ENCODE measurements at regions of chr4 and their contacts with region 1.

Region 1: DNA sequence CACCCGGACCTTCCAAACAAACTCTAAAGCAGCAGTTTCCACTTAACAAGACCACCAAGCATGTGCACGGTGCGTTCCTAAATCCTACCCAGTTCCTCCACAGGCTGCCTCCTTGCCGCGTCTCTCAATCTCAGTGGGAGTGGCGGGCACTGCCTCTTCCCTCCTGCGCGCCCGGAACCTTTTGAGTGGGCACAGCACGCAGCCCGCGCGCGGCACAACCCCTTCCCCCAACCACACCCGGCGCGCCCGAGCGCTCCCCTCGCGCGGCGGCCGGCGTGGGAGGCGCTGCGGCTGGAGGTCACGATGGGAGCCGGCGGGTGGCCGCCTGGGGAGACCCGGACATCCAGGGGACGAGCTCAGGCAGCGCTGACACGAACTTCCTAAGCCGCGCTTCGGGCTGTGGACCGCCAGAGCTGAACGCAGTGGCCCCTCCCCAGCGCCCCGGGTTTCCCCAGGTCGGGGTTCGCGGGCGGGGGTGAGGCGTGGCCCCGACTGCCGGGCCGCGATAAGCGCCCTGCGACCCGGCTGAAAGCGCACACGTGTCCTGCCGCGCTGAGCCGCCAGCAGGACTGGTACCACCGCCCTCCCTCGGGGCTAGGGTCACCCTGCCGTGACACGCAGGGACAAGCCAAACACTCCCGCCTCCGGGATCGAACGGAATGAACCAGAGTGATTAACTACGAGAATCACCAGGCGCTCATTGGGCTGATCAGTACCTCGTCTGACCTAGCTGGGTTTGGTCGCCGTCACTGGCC is at the start of gene ABCG2:
- DNase-seq: peak; percentile 47
- H3K4me3 ChIP-seq: peak within 1 kb of the TSS; percentile 59 to 78 (median 72)
- H3K27ac ChIP-seq: no peak within 1 kb of the TSS
- H3K4me1 ChIP-seq: peaks cover 15% of the 10 kb centered on the region
- H3K27me3 ChIP-seq: no peaks in the 10 kb centered on the region
- CTCF ChIP-seq: no peak
- total RNA-seq, gene ABCG2: 2.5 to 5.4 TPM

Region 2: GRCh38 chr4:88054901-88055300 is 103.8 kb before region 1 on chr4:
- CTCF ChIA-PET with region 1: no interaction called
- dilution Hi-C with region 1: no loop called
- in situ Hi-C with region 1: no loop called
- intact Hi-C with region 1: loop called (anchors 10 kb)
- DNase-seq: peak; percentile 39
- H3K4me3 ChIP-seq: no peak overlapping the region
- H3K27ac ChIP-seq: no peak overlapping the region
- H3K4me1 ChIP-seq: no peaks in the 10 kb centered on the region
- H3K27me3 ChIP-seq: no peaks in the 10 kb centered on the region
- CTCF ChIP-seq: peak; percentile 40 to 63

Region 3: DNA sequence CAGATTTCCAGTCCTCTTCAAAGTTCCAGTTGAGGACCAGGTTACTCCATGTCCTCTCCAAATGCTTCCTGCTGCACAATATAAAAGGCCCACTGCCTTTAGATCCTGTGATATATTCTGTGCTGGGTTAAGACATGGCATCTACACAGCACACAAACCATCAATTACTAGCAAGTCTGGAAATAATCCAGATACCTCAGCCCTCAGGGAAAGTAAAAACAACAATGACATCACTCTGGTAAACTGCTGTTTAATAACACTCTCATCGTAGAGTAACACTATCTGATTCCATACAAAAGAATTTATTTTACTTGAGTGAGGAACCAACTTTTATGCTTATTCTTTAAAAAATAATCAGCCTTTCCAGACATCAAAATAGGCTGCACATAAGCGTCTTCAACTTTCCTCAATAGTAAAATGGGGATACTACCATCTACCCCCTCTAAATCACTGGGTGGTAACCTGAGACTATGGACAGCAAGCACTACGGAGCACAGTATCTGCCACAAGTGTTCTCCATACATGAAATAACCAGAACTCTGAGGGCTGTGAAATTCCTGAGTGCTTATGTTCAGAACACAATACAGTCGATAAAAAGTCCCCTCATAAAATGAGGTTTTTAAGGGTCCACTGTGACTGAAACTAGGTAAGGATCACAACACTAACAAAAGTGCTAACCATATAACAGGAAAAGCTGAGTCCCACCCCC is 53.6 kb before region 1 on chr4:
- CTCF ChIA-PET with region 1: no interaction called
- dilution Hi-C with region 1: no loop called
- in situ Hi-C with region 1: no loop called
- intact Hi-C with region 1: loop called (anchors 10 kb)
- DNase-seq: peak; percentile 87
- H3K4me3 ChIP-seq: no peak overlapping the region
- H3K27ac ChIP-seq: no peak overlapping the region
- H3K4me1 ChIP-seq: peaks cover 28% of the 10 kb centered on the region
- H3K27me3 ChIP-seq: no peaks in the 10 kb centered on the region
- CTCF ChIP-seq: no peak

Region 4: GRCh38 chr4:88792268-88792781 is 633.7 kb after region 1 on chr4:
- CTCF ChIA-PET with region 1: no interaction called
- dilution Hi-C with region 1: no loop called
- in situ Hi-C with region 1: no loop called
- intact Hi-C with region 1: no loop called
- DNase-seq: peak; percentile 96
- H3K4me3 ChIP-seq: no peak overlapping the region
- H3K27ac ChIP-seq: peak overlapping the region; percentile 94
- H3K4me1 ChIP-seq: peaks cover 30% of the 10 kb centered on the region
- H3K27me3 ChIP-seq: no peaks in the 10 kb centered on the region
- CTCF ChIP-seq: no peak

Measured in mammary epithelial cell (primary cell).